Tibial artery (tissue), 4 donors: ENCODE measurements at regions of chr20 and their contacts with region 1.

Region 1: DNA sequence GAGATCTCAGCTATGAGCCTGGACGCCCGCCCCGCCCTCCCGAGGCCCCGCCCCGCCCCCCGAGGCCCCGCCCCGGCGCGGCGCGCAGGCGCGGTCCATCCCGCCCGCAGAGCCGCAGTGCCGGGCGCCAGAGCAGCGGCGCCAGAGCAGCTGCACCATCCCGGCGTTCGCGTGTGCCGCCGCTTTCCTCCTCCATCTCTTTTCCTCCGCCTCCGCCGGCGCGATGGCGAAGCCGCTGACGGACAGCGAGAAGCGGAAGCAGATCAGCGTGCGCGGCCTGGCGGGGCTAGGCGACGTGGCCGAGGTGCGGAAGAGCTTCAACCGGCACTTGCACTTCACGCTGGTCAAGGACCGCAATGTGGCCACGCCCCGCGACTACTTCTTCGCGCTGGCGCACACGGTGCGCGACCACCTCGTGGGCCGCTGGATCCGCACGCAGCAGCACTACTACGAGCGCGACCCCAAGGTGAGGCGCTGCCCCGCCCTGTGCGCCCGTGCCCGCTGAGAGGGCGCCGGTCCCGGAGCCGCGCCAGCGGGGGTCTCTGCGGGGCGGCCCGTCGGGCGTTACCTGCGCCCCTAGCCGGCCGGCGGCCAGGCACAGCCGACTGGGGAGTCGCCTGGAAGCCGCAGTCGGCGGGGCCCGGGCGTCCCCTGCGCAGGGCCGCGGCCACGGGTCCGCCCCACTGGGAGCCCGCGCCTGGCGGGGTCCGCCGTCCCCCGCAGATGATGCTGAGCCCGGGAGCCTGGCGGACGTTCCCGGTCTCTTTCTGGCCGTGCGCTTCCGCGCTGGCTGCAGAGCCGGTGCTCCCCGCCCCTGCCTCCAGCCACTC is at the start of gene PYGB:
- DNase-seq: peak; percentile 56 to 88
- H3K4me3 ChIP-seq: peak within 1 kb of the TSS; percentile 81 to 92
- H3K27ac ChIP-seq: peak within 1 kb of the TSS; percentile 98 to 99
- H3K4me1 ChIP-seq: peaks cover 4 to 48% (median 41%) of the 10 kb centered on the region in 4 donors
- H3K27me3 ChIP-seq: no peaks in the 10 kb centered on the region
- CTCF ChIP-seq: no peak

Region 2: DNA sequence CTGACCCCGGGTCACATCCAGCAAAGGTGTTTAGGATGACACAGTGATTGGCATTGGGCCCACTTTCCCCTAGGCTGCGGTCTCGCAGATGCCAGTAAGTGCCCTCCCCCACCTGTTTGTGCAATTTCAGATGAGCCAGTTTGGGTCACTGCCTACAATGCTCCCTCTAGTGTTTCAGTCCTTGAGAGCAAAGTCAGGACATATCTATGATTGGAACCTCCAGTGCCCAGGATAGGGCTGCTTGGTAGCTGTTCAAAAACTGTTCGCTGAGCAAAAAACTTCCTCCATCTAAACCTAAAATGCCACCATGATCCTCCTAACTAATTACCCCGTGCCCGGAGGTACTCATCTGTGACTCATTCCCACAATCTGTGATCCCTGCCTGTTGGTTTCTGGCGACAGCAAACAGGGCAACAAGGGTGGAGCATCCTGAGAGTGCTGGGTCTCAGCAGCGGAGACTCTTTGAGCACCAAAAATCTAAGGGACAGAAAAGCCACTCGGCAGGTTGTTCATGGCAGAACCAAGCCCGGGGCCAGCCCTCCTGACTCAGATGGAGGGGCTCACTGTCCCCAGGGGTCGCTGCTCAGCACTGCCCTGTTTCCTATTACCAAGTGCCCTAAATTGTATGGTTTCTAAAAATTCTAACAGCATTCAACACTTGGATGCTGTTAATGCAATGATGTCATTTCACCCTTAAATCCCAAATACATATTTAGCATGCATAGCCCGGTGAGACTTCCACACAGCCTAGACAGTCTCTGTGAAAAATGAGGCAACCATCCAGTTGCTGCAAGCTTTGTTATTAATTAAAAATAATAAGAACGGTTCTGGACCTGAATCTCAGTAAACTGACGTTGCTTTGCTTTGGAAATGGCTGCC is 171.2 kb before region 1 on chr20:
- intact Hi-C with region 1: loop called (anchors 5 kb)
- DNase-seq: no peak
- H3K4me3 ChIP-seq: peak overlapping the region; percentile 21 to 35
- H3K27ac ChIP-seq: peak overlapping the region in 1 of 2 donors; percentile 13
- H3K4me1 ChIP-seq: peaks cover 0 to 25% (median 15%) of the 10 kb centered on the region in 4 donors
- H3K27me3 ChIP-seq: peaks cover 0 to 68% of the 10 kb centered on the region in 2 donors
- CTCF ChIP-seq: no peak

Region 3: GRCh38 chr20:25090492-25091429 is 157.4 kb before region 1 on chr20:
- intact Hi-C with region 1: no loop called
- DNase-seq: no peak
- H3K4me3 ChIP-seq: no peak overlapping the region
- H3K27ac ChIP-seq: no peak overlapping the region
- H3K4me1 ChIP-seq: no peaks in the 10 kb centered on the region
- H3K27me3 ChIP-seq: peaks cover 0 to 60% of the 10 kb centered on the region in 2 donors
- CTCF ChIP-seq: no peak

Region 4: GRCh38 chr20:25310268-25310920 is 62.2 kb after region 1 on chr20:
- intact Hi-C with region 1: no loop called
- DNase-seq: peak; percentile 69 to 72
- H3K4me3 ChIP-seq: peak overlapping the region in 1 of 2 donors; percentile 28
- H3K27ac ChIP-seq: peak overlapping the region; percentile 42 to 50
- H3K4me1 ChIP-seq: peaks cover 0 to 30% (median 19%) of the 10 kb centered on the region in 4 donors
- H3K27me3 ChIP-seq: no peaks in the 10 kb centered on the region
- CTCF ChIP-seq: peak; percentile 49